Activated CD4-positive, alpha-beta memory T cell treated with anti-CD3 and anti-CD28 coated beads for 36 hours (primary cell): ENCODE measurements at regions of chr16 and their contacts with region 1.

Region 1: GRCh38 chr16:46973207-46973995 is at the start of gene DNAJA2:
- DNase-seq: peak; percentile 94
- H3K4me3 Mint-ChIP-seq: peak within 1 kb of the TSS; percentile 98
- H3K27ac Mint-ChIP-seq: peak within 1 kb of the TSS; percentile 98
- H3K4me1 Mint-ChIP-seq: peaks cover 59% of the 10 kb centered on the region
- H3K27me3 Mint-ChIP-seq: no peaks in the 10 kb centered on the region
- total RNA-seq, gene DNAJA2: 78.9 to 80.6 TPM

Region 2: DNA sequence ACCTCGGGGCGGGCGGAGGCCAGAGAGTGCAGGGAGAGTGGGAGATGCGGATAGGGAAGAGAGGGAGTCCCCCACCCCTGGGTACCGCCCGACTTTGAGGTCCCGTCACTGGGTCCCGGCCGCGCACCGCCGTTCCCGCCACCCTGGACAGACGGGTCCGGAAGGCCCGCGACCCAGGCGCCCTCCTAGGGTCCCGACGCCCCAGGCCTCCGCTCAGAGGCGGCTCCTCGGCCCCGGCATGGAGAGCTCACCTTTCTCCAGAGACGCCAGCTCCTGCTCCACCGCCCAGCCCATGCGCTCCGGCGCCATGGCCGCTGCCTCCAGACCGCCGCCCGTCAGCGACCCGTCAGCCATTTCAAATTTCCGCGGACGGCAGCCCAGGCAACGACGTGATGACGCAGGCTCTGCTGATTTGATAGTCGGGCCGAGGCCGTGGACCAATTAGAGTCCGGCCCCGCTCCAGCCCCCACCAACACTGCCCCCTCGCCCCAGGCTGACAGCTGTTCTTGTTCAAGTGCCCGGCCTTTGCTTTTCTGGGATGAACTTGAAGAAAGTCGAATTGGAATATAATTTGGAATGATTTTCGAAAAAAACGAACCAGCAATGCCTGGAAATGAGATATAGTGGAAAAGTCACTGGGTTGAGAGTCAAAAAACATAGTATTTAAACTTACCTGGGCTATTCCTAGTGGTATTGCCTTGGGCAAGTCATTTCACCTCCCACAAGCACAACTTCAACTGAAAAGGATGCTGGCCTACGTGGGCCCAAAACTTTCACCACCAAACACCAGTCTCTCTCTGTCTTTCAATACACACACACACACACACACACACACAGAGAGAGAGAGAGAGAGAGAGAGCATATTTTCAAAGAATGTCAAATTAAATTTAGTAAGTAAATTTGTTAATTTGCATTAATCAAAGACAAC is 352.1 kb before region 1 on chr16 and contains the start of gene SHCBP1:
- CTCF ChIA-PET with region 1: interaction called, 3 read pairs
- POLR2A ChIA-PET with region 1: no interaction called
- intact Hi-C with region 1: loop called (anchors 5 kb)
- DNase-seq: peak; percentile 91
- H3K4me3 Mint-ChIP-seq: peak within 1 kb of the TSS; percentile 89
- H3K27ac Mint-ChIP-seq: peak within 1 kb of the TSS; percentile 69
- H3K4me1 Mint-ChIP-seq: peaks cover 23% of the 10 kb centered on the region
- H3K27me3 Mint-ChIP-seq: no peaks in the 10 kb centered on the region
- total RNA-seq, gene SHCBP1: 49.0 to 50.5 TPM

Region 3: GRCh38 chr16:46947900-46948547 is 25.4 kb before region 1 on chr16:
- CTCF ChIA-PET with region 1: interaction called, 17 read pairs
- POLR2A ChIA-PET with region 1: interaction called, 36 read pairs
- intact Hi-C with region 1: loop called (anchors 1 kb)
- DNase-seq: peak; percentile 57
- H3K4me3 Mint-ChIP-seq: no peak overlapping the region
- H3K27ac Mint-ChIP-seq: peak overlapping the region; percentile 76
- H3K4me1 Mint-ChIP-seq: peaks cover 34% of the 10 kb centered on the region
- H3K27me3 Mint-ChIP-seq: no peaks in the 10 kb centered on the region

Region 4: DNA sequence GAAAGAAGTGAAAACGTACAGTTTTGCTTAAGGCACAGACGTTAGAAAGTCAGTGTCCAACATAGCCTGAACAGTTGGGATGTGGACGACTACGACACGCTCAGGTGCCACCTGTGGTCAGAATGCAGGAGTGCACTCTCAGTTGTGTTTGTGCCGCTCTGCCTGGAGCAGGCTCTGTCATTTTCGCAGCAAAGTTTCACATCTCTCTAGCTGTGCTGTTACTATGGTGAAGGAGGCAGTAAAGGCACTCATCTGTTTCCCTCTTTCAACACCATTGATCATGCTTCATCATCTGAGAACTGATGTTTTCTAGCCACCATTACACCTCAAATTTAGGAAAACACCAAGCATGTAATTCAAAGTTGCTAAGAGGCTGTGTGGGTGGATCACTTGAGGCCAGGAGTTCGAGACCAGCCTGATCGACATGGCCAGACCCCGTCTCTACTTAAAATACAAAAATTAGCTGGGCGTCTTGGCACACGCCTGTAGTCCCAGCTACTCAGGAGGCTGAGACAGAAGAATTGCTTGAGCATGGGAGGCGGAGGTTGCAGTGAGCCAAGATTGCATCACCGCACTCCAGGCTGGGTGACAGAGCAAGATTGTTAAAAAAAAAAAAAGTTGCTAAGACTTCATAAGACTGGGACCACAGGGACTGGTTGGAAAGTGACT is 45.0 kb after region 1 on chr16:
- CTCF ChIA-PET with region 1: interaction called, 6 read pairs
- POLR2A ChIA-PET with region 1: no interaction called
- intact Hi-C with region 1: loop called (anchors 1 kb)
- DNase-seq: peak; percentile 79
- H3K4me3 Mint-ChIP-seq: no peak overlapping the region
- H3K27ac Mint-ChIP-seq: no peak overlapping the region
- H3K4me1 Mint-ChIP-seq: peaks cover 19% of the 10 kb centered on the region
- H3K27me3 Mint-ChIP-seq: no peaks in the 10 kb centered on the region

Region 5: GRCh38 chr16:47058295-47059086 is 85.1 kb after region 1 on chr16:
- CTCF ChIA-PET with region 1: no interaction called
- POLR2A ChIA-PET with region 1: no interaction called
- intact Hi-C with region 1: no loop called
- DNase-seq: no peak
- H3K4me3 Mint-ChIP-seq: no peak overlapping the region
- H3K27ac Mint-ChIP-seq: no peak overlapping the region
- H3K4me1 Mint-ChIP-seq: no peaks in the 10 kb centered on the region
- H3K27me3 Mint-ChIP-seq: no peaks in the 10 kb centered on the region

Region 6: GRCh38 chr16:47110939-47111338 is 137.5 kb after region 1 on chr16:
- CTCF ChIA-PET with region 1: interaction called, 9 read pairs
- POLR2A ChIA-PET with region 1: interaction called, 5 read pairs
- intact Hi-C with region 1: loop called (anchors 1 kb)
- DNase-seq: no peak
- H3K4me3 Mint-ChIP-seq: no peak overlapping the region
- H3K27ac Mint-ChIP-seq: no peak overlapping the region
- H3K4me1 Mint-ChIP-seq: peaks cover 21% of the 10 kb centered on the region
- H3K27me3 Mint-ChIP-seq: no peaks in the 10 kb centered on the region